ENCODE measurements at regions of chr3 and their contacts with region 1.

Region 1: GRCh38 chr3:63900459-63900858 is 11.7 kb downstream of the SCAANT1 start:
- DNase-seq: peak in 1 of 5 donors; percentile 18
- ATAC-seq: peak in 2 of 4 donors; percentile 29 to 79
- H3K4me3 ChIP-seq: no peak overlapping the region
- H3K27ac ChIP-seq: no peak overlapping the region
- H3K4me1 ChIP-seq: peaks cover 0 to 27% (median 16%) of the 10 kb centered on the region in 12 donors
- H3K27me3 ChIP-seq: no peaks in the 10 kb centered on the region
- CTCF ChIP-seq: no peak
- POLR2A ChIP-seq: no peak

Region 2: DNA sequence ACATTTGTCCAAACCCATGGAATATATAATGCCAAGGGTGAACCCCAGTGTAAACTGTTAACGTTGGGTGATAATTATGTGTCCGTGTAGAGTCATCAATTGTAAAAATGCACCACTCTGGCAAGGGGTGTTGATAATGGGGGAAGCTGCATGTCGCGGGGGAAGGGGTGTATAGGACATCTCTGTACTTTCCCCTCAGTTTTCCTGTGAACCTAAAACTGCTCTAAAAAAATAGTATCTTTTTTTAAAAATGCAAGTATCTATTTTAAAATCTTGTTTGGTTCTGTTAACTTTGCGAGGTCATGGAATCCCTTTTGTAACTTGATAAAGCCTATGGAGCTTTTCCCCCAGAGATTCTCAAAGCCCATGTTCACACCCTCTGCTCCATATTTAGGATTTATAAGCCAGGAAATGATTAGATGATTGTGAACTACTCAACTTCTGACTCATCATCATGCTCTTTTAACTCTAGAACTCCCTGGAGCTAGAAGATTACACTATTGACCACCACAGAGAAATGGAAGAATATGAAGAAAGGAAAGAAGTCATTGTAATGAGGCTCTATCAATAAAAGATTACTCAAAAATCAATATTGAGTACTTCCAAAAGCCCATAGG is 137.4 kb before region 1 on chr3:
- intact Hi-C with region 1: no loop called
- DNase-seq: no peak
- ATAC-seq: no peak
- H3K4me3 ChIP-seq: no peak overlapping the region
- H3K27ac ChIP-seq: no peak overlapping the region
- H3K4me1 ChIP-seq: no peaks in the 10 kb centered on the region
- H3K27me3 ChIP-seq: peaks cover 0 to 5% (median 0%) of the 10 kb centered on the region in 9 donors
- CTCF ChIP-seq: no peak
- POLR2A ChIP-seq: no peak

Region 3: DNA sequence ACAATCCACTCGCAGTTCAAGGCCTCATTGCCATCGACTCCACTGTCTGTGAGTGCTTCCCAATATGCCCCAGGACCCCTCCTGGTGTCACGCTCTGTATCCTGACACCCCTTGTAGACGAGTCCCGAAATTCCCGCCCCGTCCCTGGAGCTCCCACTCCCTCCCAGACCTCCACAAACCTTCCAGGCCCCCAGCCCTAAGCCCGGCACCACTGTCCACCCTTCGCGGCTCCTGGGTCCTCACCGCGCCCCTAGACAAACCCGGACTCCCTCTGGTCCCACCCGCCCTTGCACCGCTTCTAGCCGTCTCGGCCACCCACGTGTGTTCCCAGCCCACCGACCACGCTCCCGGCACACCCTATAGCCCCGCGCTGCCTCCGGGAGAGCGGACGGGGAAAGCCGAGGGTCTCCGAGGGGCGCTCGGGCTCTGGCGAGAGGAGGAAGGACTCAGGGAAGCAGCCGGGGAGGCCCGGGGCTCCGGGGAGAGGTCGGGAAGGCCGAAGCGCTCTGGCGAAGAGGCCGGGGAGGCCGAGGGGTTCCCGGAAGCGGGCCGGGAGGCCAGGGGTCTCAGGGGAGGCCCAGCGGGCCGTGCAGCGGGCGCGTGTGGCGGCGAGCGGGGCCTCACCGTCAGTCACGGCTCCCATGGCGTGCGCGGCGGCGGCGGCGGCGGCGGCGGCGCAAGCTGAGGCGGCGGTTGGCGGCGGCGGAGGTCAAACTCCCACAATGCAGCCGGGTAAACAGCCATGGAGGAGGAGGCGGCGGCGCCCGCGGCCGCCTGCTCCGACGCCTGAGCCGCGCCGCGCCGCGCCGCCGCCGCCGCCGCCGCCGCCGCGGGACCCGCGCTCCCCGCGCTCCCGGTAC is 37.1 kb before region 1 on chr3 and contains the starts of genes ATXN7 and THOC7:
- intact Hi-C with region 1: loop called in 1 of 10 experiments (anchors 5 kb)
- DNase-seq: peak; percentile 72 to 87 (median 78)
- ATAC-seq: peak; percentile 45 to 90 (median 84)
- H3K4me3 ChIP-seq: peak within 1 kb of the TSS; percentile 90 to 99 (median 98)
- H3K27ac ChIP-seq: peak within 1 kb of the TSS; percentile 79 to 96 (median 92)
- H3K4me1 ChIP-seq: peaks cover 3 to 22% (median 15%) of the 10 kb centered on the region in 12 donors
- H3K27me3 ChIP-seq: no peaks in the 10 kb centered on the region
- CTCF ChIP-seq: no peak
- POLR2A ChIP-seq: no peak
- total RNA-seq, gene ATXN7: 9.6 to 31.4 (median 21.2) TPM
- total RNA-seq, gene THOC7: 63.6 to 97.0 (median 77.4) TPM

Region 4: GRCh38 chr3:64763980-64764379 is 863.5 kb after region 1 on chr3:
- intact Hi-C with region 1: no loop called
- DNase-seq: no peak
- ATAC-seq: no peak
- H3K4me3 ChIP-seq: no peak overlapping the region
- H3K27ac ChIP-seq: no peak overlapping the region
- H3K4me1 ChIP-seq: peaks cover 0 to 45% (median 22%) of the 10 kb centered on the region in 12 donors
- H3K27me3 ChIP-seq: no peaks in the 10 kb centered on the region
- CTCF ChIP-seq: no peak
- POLR2A ChIP-seq: no peak